H1 (cell line): ENCODE measurements at regions of chr4 and their contacts with region 1.

Region 1: GRCh38 chr4:168514249-168514852 is 17.5 kb downstream of the PALLD start:
- DNase-seq: no peak
- H3K4me3 ChIP-seq: no peak overlapping the region
- H3K27ac ChIP-seq: no peak overlapping the region
- H3K4me1 ChIP-seq: no peaks in the 10 kb centered on the region
- H3K27me3 ChIP-seq: no peaks in the 10 kb centered on the region
- CTCF ChIP-seq: peak in 1 of 3 experiments; percentile 5; a peak in 1 of 4 replicates
- EP300 ChIP-seq: no peak
- POLR2A ChIP-seq: no peak
- RAD21 ChIP-seq: peak in 1 of 2 experiments; percentile 23; a peak in 1 of 4 replicates

Region 2: DNA sequence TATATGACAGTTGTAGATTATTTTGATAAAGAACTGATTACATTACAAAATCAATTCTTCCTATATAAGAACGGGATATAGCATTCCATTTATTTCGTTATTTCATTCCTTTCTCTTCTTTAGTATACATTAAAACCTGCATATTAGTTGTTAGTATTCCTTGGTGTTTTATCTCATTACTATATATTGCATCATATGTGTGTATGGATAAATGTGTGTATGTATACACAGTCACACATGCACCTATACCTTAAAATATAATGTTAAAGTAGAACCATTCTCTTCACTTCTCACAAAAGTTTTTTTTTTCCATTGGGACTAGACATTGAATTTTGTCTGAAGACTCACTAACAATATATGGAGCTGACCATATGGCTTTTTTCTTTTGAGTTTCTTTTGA is 22.8 kb before region 1 on chr4:
- CTCF ChIA-PET with region 1: no interaction called
- POLR2A ChIA-PET with region 1: no interaction called
- DNase-seq: no peak
- H3K4me3 ChIP-seq: no peak overlapping the region
- H3K27ac ChIP-seq: no peak overlapping the region
- H3K4me1 ChIP-seq: no peaks in the 10 kb centered on the region
- H3K27me3 ChIP-seq: no peaks in the 10 kb centered on the region
- CTCF ChIP-seq: no peak
- EP300 ChIP-seq: no peak
- POLR2A ChIP-seq: no peak
- RAD21 ChIP-seq: no peak

Region 3: GRCh38 chr4:168503652-168504362 is 10.5 kb before region 1 on chr4:
- CTCF ChIA-PET with region 1: interaction called, 25 read pairs
- POLR2A ChIA-PET with region 1: no interaction called
- DNase-seq: no peak
- H3K4me3 ChIP-seq: no peak overlapping the region
- H3K27ac ChIP-seq: no peak overlapping the region
- H3K4me1 ChIP-seq: 0 out of 7 replicates have a peak, but pooled peaks cover 0 to 2% (median 0%) of the 10 kb centered on the region in 4 experiments
- H3K27me3 ChIP-seq: no peaks in the 10 kb centered on the region
- CTCF ChIP-seq: no peak
- EP300 ChIP-seq: no peak
- POLR2A ChIP-seq: no peak
- RAD21 ChIP-seq: no peak

Region 4: GRCh38 chr4:168528131-168528949 is 14.0 kb after region 1 on chr4:
- CTCF ChIA-PET with region 1: interaction called, 17 read pairs
- POLR2A ChIA-PET with region 1: no interaction called
- DNase-seq: no peak
- H3K4me3 ChIP-seq: no peak overlapping the region
- H3K27ac ChIP-seq: no peak overlapping the region
- H3K4me1 ChIP-seq: no peaks in the 10 kb centered on the region
- H3K27me3 ChIP-seq: peaks cover 0 to 1% (median 0%) of the 10 kb centered on the region in 4 experiments; a peak in 1 of 7 replicates
- CTCF ChIP-seq: no peak
- EP300 ChIP-seq: no peak
- POLR2A ChIP-seq: no peak
- RAD21 ChIP-seq: no peak

Region 5: GRCh38 chr4:168551945-168552695 is 37.8 kb after region 1 on chr4:
- CTCF ChIA-PET with region 1: interaction called, 14 read pairs
- POLR2A ChIA-PET with region 1: no interaction called
- DNase-seq: no peak
- H3K4me3 ChIP-seq: no peak overlapping the region
- H3K27ac ChIP-seq: no peak overlapping the region
- H3K4me1 ChIP-seq: peaks cover 0 to 2% (median 0%) of the 10 kb centered on the region in 4 experiments; a peak in 1 of 7 replicates
- H3K27me3 ChIP-seq: no peaks in the 10 kb centered on the region
- CTCF ChIP-seq: peak; percentile 30 to 60 (median 43)
- EP300 ChIP-seq: no peak
- POLR2A ChIP-seq: no peak
- RAD21 ChIP-seq: peak; percentile 70 to 77